Activated CD4-positive, alpha-beta T cell treated with anti-CD3 and anti-CD28 coated beads, Interleukin-2, amount 10 ng/mL, durations not matched to agents 24 days and 14 days (primary cell): ENCODE measurements at regions of chr6 and their contacts with region 1.

Region 1: DNA sequence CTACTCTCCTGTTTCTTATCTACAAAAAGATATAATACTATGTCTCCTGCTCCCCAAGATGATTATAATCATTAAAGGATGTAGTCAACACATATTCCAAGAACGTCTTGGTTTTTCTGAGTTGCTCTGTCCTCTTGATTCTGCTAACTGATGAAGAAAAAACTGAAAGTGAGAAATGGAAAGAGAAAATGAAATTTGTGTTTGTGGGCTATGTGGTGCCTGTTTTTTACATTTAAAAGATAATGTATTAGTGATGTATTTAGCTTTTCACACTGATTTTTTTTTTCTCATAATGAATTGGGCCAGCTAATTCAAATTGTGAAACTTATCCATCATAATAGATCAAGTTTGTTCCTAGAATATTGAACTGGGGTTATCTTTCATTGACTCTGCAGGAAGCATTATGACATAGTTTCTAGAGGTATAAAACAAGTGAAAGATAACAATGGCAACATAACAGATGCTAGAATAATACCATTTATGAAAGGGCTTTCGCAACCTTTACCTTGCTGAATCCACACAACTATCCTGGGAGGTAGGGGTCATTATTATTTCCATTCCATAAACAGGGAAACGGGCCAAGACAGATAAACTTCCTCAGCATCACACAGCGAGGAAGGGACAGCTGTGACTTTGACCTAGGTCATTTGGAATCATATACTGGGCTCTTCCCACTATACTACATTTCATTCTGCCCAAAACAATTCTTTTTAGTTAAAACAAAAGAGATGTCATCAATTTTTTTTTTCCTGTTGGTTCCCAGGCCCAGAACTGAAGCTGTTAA is 336.7 kb downstream of the GJA1 start:
- DNase-seq: peak; percentile 56
- H3K4me3 Mint-ChIP-seq: peak overlapping the region; percentile 34
- H3K27ac Mint-ChIP-seq: peak overlapping the region; percentile 82
- H3K4me1 Mint-ChIP-seq: peaks cover 21% of the 10 kb centered on the region
- H3K27me3 Mint-ChIP-seq: peaks cover 2% of the 10 kb centered on the region

Region 2: DNA sequence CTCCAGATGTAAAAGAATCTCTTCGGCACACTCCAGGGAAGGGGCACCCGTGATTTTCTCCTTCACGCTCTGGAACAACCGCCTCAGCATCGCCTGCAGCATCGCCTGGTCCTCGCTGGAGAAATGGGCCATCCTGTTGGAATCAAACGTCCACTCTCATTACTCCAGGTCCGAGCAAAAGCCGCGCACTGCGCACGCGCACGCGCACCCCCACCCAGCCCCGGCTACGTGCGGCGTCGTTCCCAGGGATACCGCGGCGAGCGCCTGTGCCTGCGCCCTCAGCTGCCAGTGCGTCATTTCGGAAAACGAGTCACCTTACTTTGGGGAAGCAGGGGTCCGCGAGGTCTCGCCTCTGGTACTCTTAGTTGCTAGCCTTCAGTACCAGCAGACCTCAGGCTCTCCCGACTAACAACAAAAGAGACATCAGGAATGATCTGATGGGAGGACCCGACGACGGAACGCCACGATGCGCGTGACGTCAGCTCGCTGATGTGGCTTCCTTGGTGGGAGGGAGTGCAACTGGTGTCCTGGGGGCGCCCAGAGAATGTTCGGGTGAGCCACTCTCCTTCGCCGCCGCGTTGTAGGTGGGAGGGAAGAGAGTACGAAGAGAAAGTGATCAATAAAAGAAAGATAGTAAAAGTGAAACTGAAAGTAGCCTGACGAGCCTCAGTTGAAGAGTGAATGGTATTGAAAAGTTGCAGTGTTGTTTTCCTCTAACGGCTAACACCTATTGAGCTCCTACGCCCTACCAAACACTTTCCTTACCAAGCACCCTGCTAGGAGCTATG is 437.6 kb before region 1 on chr6 and contains the start of gene TBC1D32:
- intact Hi-C with region 1: loop called (anchors 5 kb)
- DNase-seq: peak; percentile 96
- H3K4me3 Mint-ChIP-seq: peak within 1 kb of the TSS; percentile 91
- H3K27ac Mint-ChIP-seq: peak within 1 kb of the TSS; percentile 98
- H3K4me1 Mint-ChIP-seq: peaks cover 31% of the 10 kb centered on the region
- H3K27me3 Mint-ChIP-seq: peaks cover 3% of the 10 kb centered on the region
- total RNA-seq, gene TBC1D32: 7.6 and 8.1 TPM in 2 replicates

Region 3: DNA sequence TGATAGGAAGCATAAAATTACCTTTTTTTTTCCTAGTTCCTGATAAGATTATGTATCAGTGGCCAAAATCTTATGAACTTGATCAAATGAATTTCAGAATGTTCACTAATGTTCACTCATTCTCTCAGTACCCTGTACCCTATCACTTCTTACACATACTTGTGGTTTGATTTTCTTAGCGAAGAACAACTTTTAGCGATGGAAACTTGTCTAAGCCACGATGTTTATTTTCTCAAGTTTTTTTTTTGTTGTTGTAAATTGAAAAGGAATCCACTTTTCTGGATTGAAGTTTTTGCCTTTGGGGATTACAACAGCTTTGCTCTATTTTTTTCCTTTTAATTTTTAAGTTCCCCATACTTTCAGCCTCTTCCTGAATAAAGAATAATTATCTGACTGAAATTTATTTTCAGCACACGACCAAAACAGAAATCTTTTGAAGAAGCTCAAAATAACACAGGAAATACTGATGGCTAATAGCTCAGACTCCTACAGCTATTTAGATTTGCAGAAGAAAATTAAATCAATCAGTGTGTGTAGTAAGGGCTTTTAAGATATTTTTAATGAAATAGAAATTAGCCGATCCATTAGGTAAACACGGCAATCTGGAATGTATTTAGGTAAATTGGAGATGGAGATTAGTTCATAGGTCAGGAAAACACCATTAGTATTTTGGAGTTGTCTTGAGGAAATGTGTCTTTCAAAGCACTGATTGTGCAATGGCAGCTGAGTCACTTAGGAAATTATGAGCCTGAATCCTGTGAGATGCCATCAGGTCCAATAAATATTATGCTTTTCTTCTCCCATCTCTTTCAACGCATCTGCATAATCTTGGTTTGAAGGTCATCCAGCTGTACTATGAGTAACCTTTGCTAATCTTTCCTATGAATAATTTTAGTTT is 119.2 kb before region 1 on chr6:
- intact Hi-C with region 1: loop called (anchors 5 kb)
- DNase-seq: no peak
- H3K4me3 Mint-ChIP-seq: no peak overlapping the region
- H3K27ac Mint-ChIP-seq: no peak overlapping the region
- H3K4me1 Mint-ChIP-seq: peaks cover 21% of the 10 kb centered on the region
- H3K27me3 Mint-ChIP-seq: no peaks in the 10 kb centered on the region